Dendritic cell treated with granulocyte-macrophage colony-stimulating factor and Interleukin-4, amounts not matched to agents 40 ng/mL and 50 ng/mL, for 4 days (primary cell): ENCODE measurements at regions of chr1 and their contacts with region 1.

Region 1: GRCh38 chr1:244864253-244865027 is at the start of gene HNRNPU:
- H3K4me3 Mint-ChIP-seq: peak within 1 kb of the TSS; percentile 99
- H3K27ac Mint-ChIP-seq: peak within 1 kb of the TSS; percentile 100
- H3K4me1 Mint-ChIP-seq: peaks cover 30% of the 10 kb centered on the region
- H3K27me3 Mint-ChIP-seq: no peaks in the 10 kb centered on the region

Region 2: DNA sequence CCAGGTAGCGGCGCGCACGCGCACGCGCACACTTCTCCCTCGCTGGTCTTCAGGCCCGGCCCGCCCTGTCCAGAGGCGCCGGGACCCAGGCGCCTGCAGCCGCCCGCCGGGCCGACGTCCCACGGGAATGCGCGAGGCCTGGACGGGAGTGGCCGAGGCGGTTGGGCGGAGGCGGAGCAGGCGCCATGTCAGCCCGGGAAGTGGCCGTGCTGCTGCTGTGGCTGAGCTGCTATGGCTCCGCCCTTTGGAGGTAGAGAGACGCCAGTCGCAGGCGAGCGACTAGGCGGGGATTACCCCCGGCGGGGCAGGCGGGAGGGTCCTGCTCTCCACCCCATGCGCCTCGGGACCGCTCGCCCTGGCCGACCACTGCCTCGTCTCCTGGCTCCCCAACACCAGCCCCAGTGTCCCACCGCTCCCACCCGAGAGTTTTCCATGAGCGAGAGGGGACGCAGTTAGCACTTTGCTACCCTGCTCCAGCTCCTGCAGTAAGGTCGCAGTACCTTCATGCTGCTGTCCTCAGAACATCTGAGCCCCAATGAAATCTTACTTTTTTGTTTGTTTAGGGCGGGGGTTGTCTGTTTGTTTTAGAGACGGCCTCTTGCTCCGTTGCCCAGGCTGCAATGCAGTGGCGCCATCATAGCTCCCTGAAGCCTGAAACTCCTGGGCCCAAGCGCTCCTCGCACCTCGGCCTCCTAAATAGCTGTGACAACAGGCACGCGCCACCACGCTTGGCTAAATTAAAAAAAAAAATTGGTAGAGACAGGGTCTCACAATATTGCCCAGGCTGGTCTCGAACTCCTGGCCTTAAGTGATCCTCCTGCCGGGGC is 403.0 kb before region 1 on chr1 and contains the start of gene CATSPERE:
- intact Hi-C with region 1: loop called (anchors 5 kb)
- H3K4me3 Mint-ChIP-seq: peak within 1 kb of the TSS; percentile 95
- H3K27ac Mint-ChIP-seq: peak within 1 kb of the TSS; percentile 87
- H3K4me1 Mint-ChIP-seq: peaks cover 12% of the 10 kb centered on the region
- H3K27me3 Mint-ChIP-seq: no peaks in the 10 kb centered on the region

Region 3: GRCh38 chr1:244751271-244751895 is 113.1 kb before region 1 on chr1:
- intact Hi-C with region 1: no loop called
- H3K4me3 Mint-ChIP-seq: no peak overlapping the region
- H3K27ac Mint-ChIP-seq: no peak overlapping the region
- H3K4me1 Mint-ChIP-seq: no peaks in the 10 kb centered on the region
- H3K27me3 Mint-ChIP-seq: no peaks in the 10 kb centered on the region

Region 4: DNA sequence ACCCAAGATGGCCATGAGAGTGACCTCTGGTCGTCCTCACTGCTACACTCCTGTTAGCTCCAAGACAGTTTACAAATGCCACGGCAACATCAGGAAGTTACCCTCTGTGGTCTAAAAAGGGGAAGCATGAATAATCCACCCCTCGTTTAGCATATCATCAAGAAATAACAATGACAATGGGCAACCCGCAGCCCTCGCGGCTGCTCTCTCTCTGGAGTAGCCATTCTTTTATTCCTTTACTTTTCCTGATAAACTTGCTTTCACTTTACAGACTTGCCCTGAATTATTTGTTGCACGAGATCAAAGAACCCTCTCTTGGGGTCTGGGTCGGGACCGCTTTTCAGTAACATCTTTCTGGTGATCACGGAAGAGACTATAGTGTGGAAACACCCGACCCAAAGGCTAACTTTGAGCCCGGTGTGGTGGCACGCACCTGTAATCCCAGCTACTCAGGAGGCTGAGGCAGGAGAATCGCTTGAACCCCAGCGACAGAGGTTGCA is 48.8 kb before region 1 on chr1:
- intact Hi-C with region 1: loop called (anchors 10 kb)
- H3K4me3 Mint-ChIP-seq: peak overlapping the region; percentile 87
- H3K27ac Mint-ChIP-seq: peak overlapping the region; percentile 99
- H3K4me1 Mint-ChIP-seq: peaks cover 33% of the 10 kb centered on the region
- H3K27me3 Mint-ChIP-seq: no peaks in the 10 kb centered on the region

Region 5: DNA sequence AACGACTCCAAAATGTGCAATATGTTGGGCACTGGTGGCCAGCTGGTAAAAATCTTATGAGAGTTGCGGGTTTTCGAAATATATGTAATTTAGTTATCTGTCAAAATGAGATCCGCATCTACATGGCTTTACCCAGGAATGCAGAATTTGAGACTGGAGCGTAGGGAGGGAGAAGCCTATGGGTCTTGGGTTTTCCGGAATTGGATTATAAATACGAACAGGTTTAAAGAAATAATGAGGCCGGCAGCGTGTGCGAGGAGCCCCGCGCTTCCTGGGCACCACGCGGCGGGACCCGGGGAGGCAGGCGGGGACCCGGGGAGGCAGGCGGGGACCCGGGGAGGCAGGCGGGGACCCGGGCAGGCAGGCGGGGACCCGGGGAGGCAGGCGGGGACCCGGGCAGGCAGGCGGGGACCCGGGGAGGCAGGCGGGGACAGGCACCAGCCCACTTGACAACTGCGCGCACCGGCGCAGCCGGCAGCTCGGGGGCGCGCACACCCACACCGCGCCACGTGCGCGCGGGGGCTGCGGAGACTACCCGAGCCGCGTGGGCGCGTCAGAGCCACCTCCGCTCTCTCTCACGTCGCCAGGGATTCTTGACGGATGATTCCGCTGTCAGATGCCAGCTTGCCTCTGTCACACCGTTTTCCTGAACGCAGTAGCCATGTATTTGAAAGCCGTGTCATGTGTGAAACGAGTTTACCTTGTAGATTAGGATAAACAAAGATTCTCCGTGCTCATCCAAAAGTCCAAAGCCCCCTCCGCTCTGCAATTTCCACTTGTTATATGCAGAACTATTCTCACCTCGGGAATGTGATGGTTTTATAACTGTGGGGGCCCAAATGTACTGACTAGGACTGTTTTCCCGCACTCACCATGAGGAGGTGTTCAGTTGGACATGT is 54.2 kb after region 1 on chr1:
- intact Hi-C with region 1: loop called (anchors 5 kb)
- H3K4me3 Mint-ChIP-seq: peak overlapping the region; percentile 80
- H3K27ac Mint-ChIP-seq: peak overlapping the region; percentile 50
- H3K4me1 Mint-ChIP-seq: peaks cover 20% of the 10 kb centered on the region
- H3K27me3 Mint-ChIP-seq: peaks cover 2% of the 10 kb centered on the region

Region 6: GRCh38 chr1:245045087-245045881 is 180.8 kb after region 1 on chr1:
- intact Hi-C with region 1: loop called (anchors 5 kb)
- H3K4me3 Mint-ChIP-seq: no peak overlapping the region
- H3K27ac Mint-ChIP-seq: no peak overlapping the region
- H3K4me1 Mint-ChIP-seq: peaks cover 5% of the 10 kb centered on the region
- H3K27me3 Mint-ChIP-seq: no peaks in the 10 kb centered on the region